HepG2 (cell line): ENCODE measurements at regions of chr17 and their contacts with region 1.

Region 1: DNA sequence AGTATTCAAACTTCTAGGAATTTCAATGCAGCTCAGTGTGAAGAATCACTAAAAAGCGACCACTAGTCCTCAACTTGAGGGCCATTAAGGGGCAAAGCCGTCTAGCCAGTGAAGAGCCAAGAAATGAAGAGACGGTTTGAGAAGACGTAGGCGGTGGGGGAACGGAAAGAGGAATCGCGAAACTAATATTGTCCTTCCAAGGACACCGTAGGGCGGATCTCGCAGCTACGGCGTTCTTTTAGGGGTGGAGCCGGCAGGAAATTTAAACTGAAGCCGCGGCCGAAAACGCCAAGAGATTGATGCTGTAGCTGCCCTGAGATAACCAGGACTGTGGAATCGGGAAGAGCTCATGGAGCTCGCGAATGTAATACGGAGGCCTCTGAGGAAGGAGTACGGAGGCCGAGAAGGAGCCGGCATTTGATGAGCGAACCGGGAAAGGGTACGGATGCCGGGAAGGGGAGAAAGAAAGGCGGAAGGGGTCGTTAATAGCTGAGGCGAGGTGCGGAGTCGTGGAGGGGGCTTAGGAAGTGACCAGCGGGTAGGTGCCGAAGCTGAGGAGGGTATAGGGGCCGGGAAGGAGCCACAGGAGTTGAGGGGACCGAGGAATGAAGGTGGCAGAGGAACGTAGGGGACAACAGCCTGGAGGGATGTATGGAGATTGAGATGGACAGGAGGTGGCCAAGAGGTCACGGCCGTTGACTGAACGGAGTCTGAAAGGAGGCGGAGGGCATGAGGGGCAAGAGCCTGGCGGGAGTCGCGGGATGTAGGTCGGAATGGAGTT is at the start of gene DBF4B:
- DNase-seq: peak; percentile 81
- ATAC-seq: peak; percentile 85
- H3K4me3 ChIP-seq: peak within 1 kb of the TSS; percentile 76 to 98 (median 85)
- H3K27ac ChIP-seq: peak within 1 kb of the TSS; percentile 73
- H3K4me1 ChIP-seq: peaks cover 24% of the 10 kb centered on the region
- H3K27me3 ChIP-seq: no peaks in the 10 kb centered on the region; a peak in 1 of 5 replicates
- CTCF ChIP-seq: peak; percentile 20
- EP300 ChIP-seq: peak in 1 of 2 experiments; percentile 24; a peak in 1 of 4 replicates
- POLR2A ChIP-seq: peak; percentile 75 to 79
- RAD21 ChIP-seq: peak; percentile 30; the same call in 1 of the 2 replicates
- total RNA-seq, gene DBF4B: 9.0 and 11.7 TPM in 2 replicates

Region 2: DNA sequence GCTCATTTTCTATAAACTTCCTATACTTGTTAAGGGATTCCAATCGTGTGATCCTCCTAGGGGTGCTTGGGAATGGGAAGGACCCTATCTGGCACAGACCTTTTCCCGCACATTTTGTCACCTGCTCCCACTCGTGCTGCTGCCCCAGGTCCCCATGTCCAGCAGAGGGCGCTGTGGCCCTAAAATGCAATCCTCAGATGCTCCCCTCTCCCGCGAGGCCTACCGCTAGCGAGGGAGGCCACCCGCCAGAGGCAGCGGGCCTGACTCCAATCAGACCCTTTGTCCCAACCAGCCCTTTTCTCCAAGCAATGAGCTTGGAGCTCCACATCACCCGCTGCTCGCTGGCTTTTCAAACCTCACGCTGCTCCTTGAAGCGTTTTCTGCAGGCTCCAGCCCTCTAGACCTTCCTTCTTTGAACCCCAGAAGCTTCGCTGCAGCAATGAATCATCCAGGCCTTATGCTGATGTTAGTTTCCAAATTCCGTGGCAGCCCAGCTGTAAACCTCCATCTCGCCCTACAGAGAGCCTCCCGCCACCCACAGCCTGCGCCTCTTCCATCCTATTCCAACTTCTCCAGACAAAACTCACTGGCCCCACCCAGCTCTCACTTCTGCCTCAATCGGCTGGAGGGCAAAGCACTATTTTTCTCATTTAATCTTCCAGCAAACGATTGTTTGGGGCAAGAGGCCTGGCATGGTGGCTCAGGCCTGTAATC is 174.9 kb before region 1 on chr17:
- CTCF ChIA-PET with region 1: no interaction called
- POLR2A ChIA-PET with region 1: no interaction called
- in situ Hi-C with region 1: no loop called
- intact Hi-C with region 1: no loop called
- DNase-seq: peak; percentile 81
- ATAC-seq: peak; percentile 96
- H3K4me3 ChIP-seq: peak overlapping the region; percentile 12 to 56 (median 17); a peak in 2 of 6 replicates
- H3K27ac ChIP-seq: no peak overlapping the region
- H3K4me1 ChIP-seq: peaks cover 16% of the 10 kb centered on the region
- H3K27me3 ChIP-seq: peaks cover 3 to 16% of the 10 kb centered on the region in 2 experiments; a peak in 2 of 5 replicates
- CTCF ChIP-seq: peak; percentile 99
- EP300 ChIP-seq: no peak
- POLR2A ChIP-seq: 0 out of 4 replicates have a peak, but pooled peaks of 1 of the 2 experiments have one; percentile 30
- RAD21 ChIP-seq: peak; percentile 98

Region 3: GRCh38 chr17:44689477-44690217 is 18.9 kb before region 1 on chr17 and contains the start of gene CCDC43:
- CTCF ChIA-PET with region 1: no interaction called
- POLR2A ChIA-PET with region 1: interaction called, 10 read pairs
- in situ Hi-C with region 1: no loop called
- intact Hi-C with region 1: no loop called
- DNase-seq: peak; percentile 90
- ATAC-seq: peak; percentile 98
- H3K4me3 ChIP-seq: peak within 1 kb of the TSS; percentile 90 to 95 (median 92)
- H3K27ac ChIP-seq: peak within 1 kb of the TSS; percentile 81
- H3K4me1 ChIP-seq: peaks cover 34% of the 10 kb centered on the region
- H3K27me3 ChIP-seq: peaks cover 0 to 3% of the 10 kb centered on the region in 2 experiments; a peak in 1 of 5 replicates
- CTCF ChIP-seq: 0 out of 2 replicates have a peak, but pooled peaks have one; percentile 17
- EP300 ChIP-seq: peak; percentile 17 to 56; a peak in 2 of 4 replicates
- POLR2A ChIP-seq: peak; percentile 98
- RAD21 ChIP-seq: peak; percentile 36; the same call in 1 of the 2 replicates
- total RNA-seq, gene CCDC43: 94.8 and 116 TPM in 2 replicates

Region 4: GRCh38 chr17:44749076-44749979 is 40.7 kb after region 1 on chr17:
- CTCF ChIA-PET with region 1: no interaction called
- POLR2A ChIA-PET with region 1: no interaction called
- in situ Hi-C with region 1: no loop called
- intact Hi-C with region 1: no loop called
- DNase-seq: no peak
- ATAC-seq: no peak; the same call in 2 of the 3 replicates
- H3K4me3 ChIP-seq: no peak overlapping the region
- H3K27ac ChIP-seq: no peak overlapping the region
- H3K4me1 ChIP-seq: peaks cover 16% of the 10 kb centered on the region
- H3K27me3 ChIP-seq: no peaks in the 10 kb centered on the region
- CTCF ChIP-seq: no peak
- EP300 ChIP-seq: no peak
- POLR2A ChIP-seq: no peak
- RAD21 ChIP-seq: no peak